Naive thymus-derived CD4-positive, alpha-beta T cell (primary cell): ENCODE measurements at regions of chr1 and their contacts with region 1.

Region 1: DNA sequence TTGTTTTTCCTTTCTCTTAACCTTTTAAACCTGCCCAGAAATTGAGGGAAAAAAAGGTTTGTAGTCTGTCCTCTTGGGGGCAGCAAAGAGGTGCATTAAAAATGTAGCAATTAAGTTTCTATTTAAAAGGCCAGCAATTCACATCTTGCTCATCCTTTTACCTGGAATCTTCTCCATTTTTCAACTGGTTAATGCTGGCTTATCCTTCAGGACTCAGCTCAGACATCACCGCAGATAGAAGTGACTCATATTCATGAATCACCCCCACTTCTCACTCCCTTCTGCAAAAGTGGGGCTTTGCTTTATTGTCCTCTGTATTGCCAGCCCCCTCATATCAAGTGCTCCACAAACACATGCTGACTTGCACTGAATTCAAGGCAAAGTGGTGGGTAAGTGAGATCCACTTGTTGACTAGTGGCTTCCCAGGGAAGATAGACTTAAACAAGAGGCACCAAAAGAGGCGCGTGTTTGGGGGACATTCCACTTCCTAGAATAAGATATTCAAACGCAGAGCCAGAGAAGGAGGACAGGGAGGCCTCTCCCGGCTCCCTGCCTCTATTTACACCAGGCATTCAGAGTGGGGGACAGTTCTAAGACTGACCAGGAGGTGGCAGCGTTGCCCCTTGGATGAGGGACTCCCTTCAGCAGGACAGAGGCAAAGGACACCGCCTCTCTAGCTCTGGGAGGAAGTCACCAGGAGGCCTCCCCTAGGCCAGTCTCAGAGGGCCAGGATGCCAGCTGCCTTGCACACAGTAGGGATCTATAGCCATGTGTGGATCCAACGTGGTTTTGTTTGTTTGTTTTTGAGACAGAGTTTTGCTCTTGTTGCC is 23.2 kb upstream of the ZNF648 start:
- DNase-seq: peak; percentile 60 to 79 (median 75)
- ATAC-seq: peak; percentile 90
- H3K4me3 ChIP-seq: no peak overlapping the region
- H3K4me3 Mint-ChIP-seq: peak overlapping the region in 8 of 10 donors; percentile 8 to 45 (median 33)
- H3K27ac ChIP-seq: no peak overlapping the region
- H3K27ac Mint-ChIP-seq: peak overlapping the region; percentile 49 to 88 (median 83)
- H3K4me1 ChIP-seq: peaks cover 15 to 47% of the 10 kb centered on the region in 2 donors
- H3K4me1 Mint-ChIP-seq: peaks cover 27 to 54% (median 52%) of the 10 kb centered on the region in 7 donors
- H3K27me3 ChIP-seq: no peaks in the 10 kb centered on the region
- H3K27me3 Mint-ChIP-seq: no peaks in the 10 kb centered on the region

Region 2: GRCh38 chr1:181541947-181542346 is 542.8 kb before region 1 on chr1:
- CTCF ChIA-PET with region 1: no interaction called
- POLR2A ChIA-PET with region 1: no interaction called
- intact Hi-C with region 1: no loop called
- DNase-seq: no peak
- ATAC-seq: no peak
- H3K4me3 ChIP-seq: no peak overlapping the region
- H3K4me3 Mint-ChIP-seq: no peak overlapping the region
- H3K27ac ChIP-seq: no peak overlapping the region
- H3K27ac Mint-ChIP-seq: no peak overlapping the region
- H3K4me1 ChIP-seq: no peaks in the 10 kb centered on the region
- H3K4me1 Mint-ChIP-seq: no peaks in the 10 kb centered on the region
- H3K27me3 ChIP-seq: no peaks in the 10 kb centered on the region
- H3K27me3 Mint-ChIP-seq: peaks cover 30 to 61% (median 48%) of the 10 kb centered on the region in 5 donors

Region 3: GRCh38 chr1:182069028-182069466 is 15.7 kb before region 1 on chr1:
- CTCF ChIA-PET with region 1: interaction called, 13 read pairs
- POLR2A ChIA-PET with region 1: no interaction called
- intact Hi-C with region 1: no loop called
- DNase-seq: peak in 1 of 9 donors; percentile 41
- ATAC-seq: peak; percentile 51
- H3K4me3 ChIP-seq: no peak overlapping the region
- H3K4me3 Mint-ChIP-seq: peak overlapping the region in 1 of 10 donors; percentile 35
- H3K27ac ChIP-seq: no peak overlapping the region
- H3K27ac Mint-ChIP-seq: no peak overlapping the region
- H3K4me1 ChIP-seq: no peaks in the 10 kb centered on the region
- H3K4me1 Mint-ChIP-seq: peaks cover 0 to 10% (median 2%) of the 10 kb centered on the region in 7 donors
- H3K27me3 ChIP-seq: no peaks in the 10 kb centered on the region
- H3K27me3 Mint-ChIP-seq: peaks cover 11 to 37% (median 30%) of the 10 kb centered on the region in 5 donors

Region 4: DNA sequence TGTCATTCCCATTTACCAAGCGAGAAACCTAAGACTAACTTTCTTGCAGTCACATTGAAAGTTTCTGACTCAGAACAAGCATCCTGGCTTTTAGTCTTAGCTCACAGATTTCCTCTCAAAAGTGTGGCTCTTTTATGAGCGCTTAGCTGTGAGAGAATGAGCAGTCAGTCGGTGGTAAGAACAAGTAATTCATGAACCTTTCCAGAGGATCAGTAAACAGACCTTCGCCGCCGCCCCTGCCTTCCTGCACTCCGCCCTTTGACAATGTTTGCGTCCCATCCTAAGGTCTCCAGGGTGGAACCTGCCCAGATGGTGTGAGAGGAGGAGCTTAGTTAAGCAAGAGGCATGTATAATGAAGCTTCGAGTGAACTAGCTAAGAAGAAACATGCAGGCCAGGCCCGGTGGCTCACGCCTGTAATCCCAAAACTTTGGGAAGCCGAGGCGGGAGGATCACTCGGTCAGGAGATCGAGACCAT is 164.5 kb after region 1 on chr1:
- CTCF ChIA-PET with region 1: no interaction called
- POLR2A ChIA-PET with region 1: no interaction called
- intact Hi-C with region 1: loop called in 1 of 2 experiments (anchors 5 kb)
- DNase-seq: peak in 1 of 9 donors; percentile 52
- ATAC-seq: no peak
- H3K4me3 ChIP-seq: no peak overlapping the region
- H3K4me3 Mint-ChIP-seq: peak overlapping the region in 2 of 10 donors; percentile 30 to 33
- H3K27ac ChIP-seq: no peak overlapping the region
- H3K27ac Mint-ChIP-seq: peak overlapping the region in 2 of 9 donors; percentile 20 to 82
- H3K4me1 ChIP-seq: peaks cover 0 to 7% of the 10 kb centered on the region in 2 donors
- H3K4me1 Mint-ChIP-seq: peaks cover 0 to 16% (median 4%) of the 10 kb centered on the region in 7 donors
- H3K27me3 ChIP-seq: no peaks in the 10 kb centered on the region
- H3K27me3 Mint-ChIP-seq: no peaks in the 10 kb centered on the region

Region 5: DNA sequence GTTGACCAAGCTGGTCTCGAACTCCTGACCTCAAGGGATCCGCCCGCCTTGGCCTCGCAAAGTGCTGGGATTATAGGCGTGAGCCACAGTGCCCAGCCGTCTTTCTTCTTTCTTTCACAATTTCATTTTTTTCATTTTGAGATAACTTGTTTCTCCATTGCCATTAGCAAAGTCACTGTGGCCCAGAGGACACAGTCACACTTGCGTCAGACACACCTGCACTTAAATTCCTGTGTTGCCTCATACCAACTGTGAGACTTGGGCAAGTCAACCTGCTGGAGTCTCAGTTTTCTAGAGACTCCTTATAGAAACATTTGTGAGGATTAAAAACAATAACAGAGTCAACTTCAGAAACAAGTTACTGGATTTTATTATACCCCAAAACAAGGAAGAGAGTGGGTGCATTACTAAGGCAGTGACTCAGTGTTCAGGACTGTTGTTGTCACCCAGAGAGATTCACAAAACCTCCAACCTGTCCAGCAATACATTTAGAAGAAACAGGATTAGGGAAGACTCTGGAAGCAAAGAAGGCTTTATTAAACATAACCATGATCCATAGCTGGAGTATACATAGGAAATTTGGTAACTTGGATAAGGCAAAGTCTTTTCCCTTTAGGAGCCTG is 313.2 kb after region 1 on chr1:
- CTCF ChIA-PET with region 1: interaction called, 230 read pairs
- POLR2A ChIA-PET with region 1: interaction called, 14 read pairs
- intact Hi-C with region 1: loop called (anchors 1 kb)
- DNase-seq: no peak
- ATAC-seq: no peak
- H3K4me3 ChIP-seq: no peak overlapping the region
- H3K4me3 Mint-ChIP-seq: no peak overlapping the region
- H3K27ac ChIP-seq: no peak overlapping the region
- H3K27ac Mint-ChIP-seq: no peak overlapping the region
- H3K4me1 ChIP-seq: no peaks in the 10 kb centered on the region
- H3K4me1 Mint-ChIP-seq: peaks cover 5 to 11% (median 6%) of the 10 kb centered on the region in 7 donors
- H3K27me3 ChIP-seq: no peaks in the 10 kb centered on the region
- H3K27me3 Mint-ChIP-seq: peaks cover 0 to 28% (median 0%) of the 10 kb centered on the region in 5 donors

Region 6: GRCh38 chr1:182604169-182605164 is 519.8 kb after region 1 on chr1 and contains the start of gene RGS16:
- CTCF ChIA-PET with region 1: interaction called, 7 read pairs
- POLR2A ChIA-PET with region 1: no interaction called
- intact Hi-C with region 1: loop called in 1 of 2 experiments (anchors 5 kb)
- DNase-seq: peak; percentile 69 to 95 (median 76)
- ATAC-seq: peak; percentile 93
- H3K4me3 ChIP-seq: peak within 1 kb of the TSS; percentile 59
- H3K4me3 Mint-ChIP-seq: peak within 1 kb of the TSS in 8 of 10 donors; percentile 6 to 87 (median 82)
- H3K27ac ChIP-seq: peak within 1 kb of the TSS; percentile 37
- H3K27ac Mint-ChIP-seq: peak within 1 kb of the TSS in 6 of 9 donors; percentile 13 to 84 (median 71)
- H3K4me1 ChIP-seq: peaks cover 13 to 26% of the 10 kb centered on the region in 2 donors
- H3K4me1 Mint-ChIP-seq: peaks cover 4 to 37% (median 18%) of the 10 kb centered on the region in 7 donors
- H3K27me3 ChIP-seq: no peaks in the 10 kb centered on the region
- H3K27me3 Mint-ChIP-seq: peaks cover 0 to 12% (median 7%) of the 10 kb centered on the region in 5 donors
- total RNA-seq, gene RGS16: 0.49 to 17.5 (median 3.4) TPM

Region 7: DNA sequence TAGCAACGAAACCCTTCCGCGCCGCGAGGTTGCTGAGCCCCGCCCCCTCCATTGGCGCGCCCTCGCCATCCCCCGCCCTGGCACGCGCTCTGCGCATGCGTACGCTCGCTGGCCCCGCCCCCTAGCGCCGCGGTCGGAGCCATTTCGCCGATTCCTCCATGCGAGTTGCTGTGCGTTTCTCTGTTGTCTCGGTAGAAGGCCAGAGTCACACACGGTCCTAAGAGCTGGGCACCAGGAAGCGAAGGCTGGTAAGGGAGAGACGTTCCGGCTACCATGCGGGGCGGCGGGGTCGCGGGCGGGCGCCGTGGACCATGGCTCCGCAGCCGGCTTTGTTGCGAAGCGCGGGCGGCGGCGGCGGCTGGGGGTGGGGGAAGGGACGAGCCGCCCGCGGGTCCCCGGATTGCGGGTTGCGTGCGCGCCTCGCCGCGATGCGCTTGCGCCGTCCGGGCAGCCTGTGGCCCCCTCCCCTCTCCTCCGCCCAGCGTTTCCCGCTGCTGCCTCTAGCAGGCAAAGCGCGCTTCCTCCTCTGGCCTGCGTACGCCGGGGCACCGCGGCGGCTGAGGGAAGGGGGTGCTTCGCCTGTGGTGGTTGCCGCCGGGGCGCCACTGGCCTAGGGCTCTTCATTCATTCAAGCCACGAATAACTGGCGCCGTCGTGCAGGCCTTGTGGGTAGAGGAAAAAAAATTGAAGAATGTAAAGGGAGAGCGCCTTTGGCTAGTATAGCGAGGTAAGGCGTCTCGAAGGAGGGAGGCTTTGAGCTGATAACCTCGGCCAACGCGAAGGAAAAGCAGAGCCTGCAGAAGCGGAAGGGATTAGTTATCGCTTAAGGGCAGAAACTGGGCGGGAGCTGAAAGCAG is 754.7 kb after region 1 on chr1 and contains the start of gene DHX9:
- CTCF ChIA-PET with region 1: no interaction called
- POLR2A ChIA-PET with region 1: no interaction called
- intact Hi-C with region 1: loop called in 1 of 2 experiments (anchors 10 kb)
- DNase-seq: peak; percentile 93 to 100 (median 97)
- ATAC-seq: peak; percentile 89
- H3K4me3 ChIP-seq: peak within 1 kb of the TSS; percentile 99
- H3K4me3 Mint-ChIP-seq: peak within 1 kb of the TSS; percentile 91 to 100 (median 98)
- H3K27ac ChIP-seq: peak within 1 kb of the TSS; percentile 84
- H3K27ac Mint-ChIP-seq: peak within 1 kb of the TSS; percentile 92 to 100 (median 98)
- H3K4me1 ChIP-seq: peaks cover 22 to 33% of the 10 kb centered on the region in 2 donors
- H3K4me1 Mint-ChIP-seq: peaks cover 36 to 61% (median 54%) of the 10 kb centered on the region in 7 donors
- H3K27me3 ChIP-seq: no peaks in the 10 kb centered on the region
- H3K27me3 Mint-ChIP-seq: peaks cover 0 to 9% (median 0%) of the 10 kb centered on the region in 5 donors
- total RNA-seq, gene DHX9: 207 to 299 (median 227) TPM